Caco-2 (cell line): ENCODE measurements at regions of chr5 and their contacts with region 1.

Region 1: DNA sequence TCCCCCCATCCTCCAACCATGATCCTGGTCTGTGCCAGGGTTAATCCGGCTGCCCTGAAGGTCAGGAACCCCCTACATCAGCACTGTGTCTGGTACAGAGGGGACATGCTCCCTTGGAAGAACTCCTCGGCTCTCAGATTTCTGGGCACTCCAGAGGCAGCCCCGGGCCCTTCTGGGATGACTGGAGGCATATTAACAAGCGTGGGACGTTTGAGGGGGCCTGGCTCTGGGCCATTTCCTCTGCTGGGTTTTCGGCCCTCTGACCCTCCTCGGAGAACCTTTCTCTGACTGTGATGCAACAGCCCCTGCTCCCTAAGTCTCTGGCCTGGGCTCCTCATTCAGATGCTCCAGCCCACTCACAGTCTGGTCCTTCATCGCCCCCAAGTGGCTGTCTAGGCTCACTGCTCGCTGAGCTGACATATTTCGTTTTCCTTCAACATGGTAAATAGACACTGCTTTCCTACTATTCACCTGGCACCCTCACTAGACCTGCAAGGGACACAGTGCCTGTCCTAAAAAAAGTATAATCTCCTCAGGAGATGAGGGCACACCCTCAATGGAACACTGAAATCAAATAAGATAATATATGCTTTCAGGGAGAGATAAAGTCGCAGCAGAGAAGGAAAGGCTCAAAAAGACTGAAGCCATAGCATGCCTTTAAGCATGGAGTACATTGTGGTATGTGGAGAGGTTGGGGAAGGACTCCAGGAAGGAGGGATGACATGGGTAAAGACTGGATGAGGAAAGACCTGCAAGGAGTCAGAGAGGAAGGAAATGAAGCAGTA is 404.7 kb upstream of the TRPC7 start:
- DNase-seq: peak; percentile 78 to 80
- H3K4me3 ChIP-seq: no peak overlapping the region
- H3K4me3 Mint-ChIP-seq: no peak overlapping the region
- H3K27ac Mint-ChIP-seq: no peak overlapping the region
- H3K4me1 ChIP-seq: peaks cover 7% of the 10 kb centered on the region; the same call in 1 of the 2 replicates
- H3K4me1 Mint-ChIP-seq: peaks cover 7% of the 10 kb centered on the region
- H3K27me3 ChIP-seq: no peaks in the 10 kb centered on the region
- H3K27me3 Mint-ChIP-seq: peaks cover 6% of the 10 kb centered on the region
- CTCF ChIP-seq: peak; percentile 87 to 93

Region 2: DNA sequence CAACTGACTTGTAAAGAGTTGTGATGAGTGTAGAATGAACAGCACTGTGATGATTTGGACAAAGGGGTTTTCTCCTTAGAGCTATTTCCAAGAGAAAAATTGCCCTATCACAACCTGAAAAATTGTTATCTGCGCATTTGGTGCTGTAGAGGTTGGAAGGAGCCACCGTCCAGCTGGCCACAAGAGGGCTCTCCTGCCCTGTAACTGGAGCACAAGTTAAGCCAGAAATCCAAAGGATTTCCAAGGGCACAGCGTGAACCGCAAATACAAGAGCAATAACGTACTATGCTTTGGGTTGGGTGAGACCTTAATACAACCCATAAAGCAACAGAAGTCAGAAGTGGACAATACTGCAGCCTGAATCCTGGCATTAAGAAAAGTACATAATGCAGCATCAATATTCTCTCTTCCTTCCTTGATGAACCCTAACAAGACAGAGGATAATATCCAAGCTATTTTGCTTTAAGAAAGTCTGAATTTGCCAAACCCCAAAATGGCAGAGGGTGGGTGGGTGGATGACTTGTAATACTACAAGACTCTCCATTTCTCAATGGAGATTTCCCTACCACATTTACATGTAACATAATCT is 520.3 kb before region 1 on chr5:
- CTCF ChIA-PET with region 1: interaction called, 10 read pairs
- POLR2A ChIA-PET with region 1: no interaction called
- intact Hi-C with region 1: loop called (anchors 1 kb)
- DNase-seq: peak; percentile 67 to 70
- H3K4me3 ChIP-seq: no peak overlapping the region
- H3K4me3 Mint-ChIP-seq: no peak overlapping the region
- H3K27ac Mint-ChIP-seq: no peak overlapping the region
- H3K4me1 ChIP-seq: no peaks in the 10 kb centered on the region
- H3K4me1 Mint-ChIP-seq: no peaks in the 10 kb centered on the region
- H3K27me3 ChIP-seq: no peaks in the 10 kb centered on the region
- H3K27me3 Mint-ChIP-seq: peaks cover 17% of the 10 kb centered on the region
- CTCF ChIP-seq: peak; percentile 84 to 97

Region 3: GRCh38 chr5:136364307-136364706 is 405.8 kb before region 1 on chr5:
- CTCF ChIA-PET with region 1: interaction called, 5 read pairs
- POLR2A ChIA-PET with region 1: no interaction called
- intact Hi-C with region 1: loop called (anchors 1 kb)
- DNase-seq: no peak
- H3K4me3 ChIP-seq: no peak overlapping the region
- H3K4me3 Mint-ChIP-seq: no peak overlapping the region
- H3K27ac Mint-ChIP-seq: no peak overlapping the region
- H3K4me1 ChIP-seq: no peaks in the 10 kb centered on the region
- H3K4me1 Mint-ChIP-seq: no peaks in the 10 kb centered on the region
- H3K27me3 ChIP-seq: no peaks in the 10 kb centered on the region
- H3K27me3 Mint-ChIP-seq: peaks cover 7% of the 10 kb centered on the region
- CTCF ChIP-seq: peak; percentile 10 to 35

Region 4: GRCh38 chr5:136374003-136374402 is 396.1 kb before region 1 on chr5:
- CTCF ChIA-PET with region 1: interaction called, 3 read pairs
- POLR2A ChIA-PET with region 1: no interaction called
- intact Hi-C with region 1: loop called (anchors 1 kb)
- DNase-seq: peak; percentile 43 to 44
- H3K4me3 ChIP-seq: no peak overlapping the region
- H3K4me3 Mint-ChIP-seq: no peak overlapping the region
- H3K27ac Mint-ChIP-seq: no peak overlapping the region
- H3K4me1 ChIP-seq: no peaks in the 10 kb centered on the region
- H3K4me1 Mint-ChIP-seq: no peaks in the 10 kb centered on the region
- H3K27me3 ChIP-seq: no peaks in the 10 kb centered on the region
- H3K27me3 Mint-ChIP-seq: peaks cover 15% of the 10 kb centered on the region
- CTCF ChIP-seq: peak; percentile 45 to 55

Region 5: GRCh38 chr5:136424835-136425584 is 345.1 kb before region 1 on chr5:
- CTCF ChIA-PET with region 1: no interaction called
- POLR2A ChIA-PET with region 1: no interaction called
- intact Hi-C with region 1: loop called (anchors 2 kb)
- DNase-seq: peak; percentile 83 to 89
- H3K4me3 ChIP-seq: no peak overlapping the region
- H3K4me3 Mint-ChIP-seq: no peak overlapping the region
- H3K27ac Mint-ChIP-seq: no peak overlapping the region
- H3K4me1 ChIP-seq: no peaks in the 10 kb centered on the region
- H3K4me1 Mint-ChIP-seq: no peaks in the 10 kb centered on the region
- H3K27me3 ChIP-seq: no peaks in the 10 kb centered on the region
- H3K27me3 Mint-ChIP-seq: peaks cover 24% of the 10 kb centered on the region
- CTCF ChIP-seq: peak; percentile 84 to 93

Region 6: GRCh38 chr5:136638077-136638476 is 132.0 kb before region 1 on chr5:
- CTCF ChIA-PET with region 1: interaction called, 13 read pairs
- POLR2A ChIA-PET with region 1: no interaction called
- intact Hi-C with region 1: loop called (anchors 1 kb)
- DNase-seq: no peak
- H3K4me3 ChIP-seq: no peak overlapping the region
- H3K4me3 Mint-ChIP-seq: no peak overlapping the region
- H3K27ac Mint-ChIP-seq: no peak overlapping the region
- H3K4me1 ChIP-seq: no peaks in the 10 kb centered on the region
- H3K4me1 Mint-ChIP-seq: no peaks in the 10 kb centered on the region
- H3K27me3 ChIP-seq: peaks cover 1% of the 10 kb centered on the region; the same call in 1 of the 2 replicates
- H3K27me3 Mint-ChIP-seq: peaks cover 6% of the 10 kb centered on the region
- CTCF ChIP-seq: peak in 1 of 2 experiments; percentile 32

Region 7: GRCh38 chr5:136686192-136686872 is 83.8 kb before region 1 on chr5:
- CTCF ChIA-PET with region 1: interaction called, 6 read pairs
- POLR2A ChIA-PET with region 1: no interaction called
- intact Hi-C with region 1: loop called (anchors 1 kb)
- DNase-seq: peak; percentile 36 to 48
- H3K4me3 ChIP-seq: no peak overlapping the region
- H3K4me3 Mint-ChIP-seq: no peak overlapping the region
- H3K27ac Mint-ChIP-seq: no peak overlapping the region
- H3K4me1 ChIP-seq: peaks cover 9% of the 10 kb centered on the region; the same call in 1 of the 2 replicates
- H3K4me1 Mint-ChIP-seq: peaks cover 11% of the 10 kb centered on the region
- H3K27me3 ChIP-seq: no peaks in the 10 kb centered on the region
- H3K27me3 Mint-ChIP-seq: peaks cover 2% of the 10 kb centered on the region
- CTCF ChIP-seq: peak; percentile 51 to 80